Psoas muscle (tissue), 8 donors: ENCODE measurements at regions of chr18 and their contacts with region 1.

Region 1: GRCh38 chr18:79988451-79989194 is at the start of gene TXNL4A:
- DNase-seq: peak; percentile 89 to 93
- ATAC-seq: peak; percentile 98 to 99 (median 98)
- H3K4me3 ChIP-seq: peak within 1 kb of the TSS; percentile 96
- H3K27ac ChIP-seq: peak within 1 kb of the TSS; percentile 100
- H3K4me1 ChIP-seq: peaks cover 23% of the 10 kb centered on the region
- H3K27me3 ChIP-seq: no peaks in the 10 kb centered on the region
- CTCF ChIP-seq: no peak
- total RNA-seq, gene TXNL4A: 81.5 to 147 (median 108) TPM

Region 2: DNA sequence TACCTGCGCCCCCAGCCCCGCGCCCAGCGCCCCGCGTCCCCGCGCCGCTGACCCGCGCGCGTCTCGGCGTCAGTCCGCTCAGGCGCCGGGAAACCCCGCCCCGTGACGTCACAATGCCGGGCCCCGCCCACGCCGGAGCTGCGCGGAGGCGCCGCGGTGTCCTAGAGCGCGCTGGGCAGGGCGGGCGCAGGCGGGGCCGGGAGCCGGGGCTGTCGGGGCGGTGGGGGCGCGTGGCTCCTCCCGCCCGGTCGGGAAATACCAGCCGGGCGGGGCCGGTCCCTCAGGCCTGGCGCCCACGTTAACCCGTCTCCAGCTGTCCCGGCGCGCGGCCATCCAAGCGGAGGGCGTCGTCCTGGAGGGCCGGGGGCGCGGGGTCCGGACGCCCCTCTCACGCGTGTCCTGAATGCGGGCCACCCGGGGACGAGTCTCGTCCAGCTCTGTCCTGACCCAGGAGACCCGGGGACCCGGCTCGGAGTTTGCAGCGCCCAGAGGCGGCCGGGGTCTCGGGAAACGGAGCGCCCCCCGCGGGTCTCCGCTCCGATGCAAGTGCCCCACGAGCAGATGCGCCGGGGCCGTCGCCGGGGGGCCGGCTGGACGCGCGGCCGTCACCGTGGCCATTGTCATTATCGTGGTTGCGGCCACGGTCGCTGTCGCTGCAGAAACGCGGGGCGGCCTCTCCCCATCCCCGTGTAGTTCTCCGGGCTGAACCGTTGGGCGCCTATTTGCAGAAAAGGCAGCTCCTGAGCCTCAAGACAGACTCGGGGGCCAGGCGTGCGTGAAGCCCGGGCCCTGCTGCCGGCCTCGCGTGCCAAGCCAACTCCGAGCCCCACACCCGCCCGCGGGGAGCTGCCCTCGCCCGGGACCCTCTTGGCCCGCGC is 36.8 kb before region 1 on chr18 and contains the start of gene SLC66A2:
- intact Hi-C with region 1: loop called (anchors 5 kb)
- DNase-seq: peak; percentile 94 to 97
- ATAC-seq: peak; percentile 82 to 92 (median 84)
- H3K4me3 ChIP-seq: peak within 1 kb of the TSS; percentile 77
- H3K27ac ChIP-seq: peak within 1 kb of the TSS; percentile 85
- H3K4me1 ChIP-seq: peaks cover 33% of the 10 kb centered on the region
- H3K27me3 ChIP-seq: no peaks in the 10 kb centered on the region
- CTCF ChIP-seq: no peak
- total RNA-seq, gene SLC66A2: 36.4 to 160 (median 72.7) TPM

Region 3: DNA sequence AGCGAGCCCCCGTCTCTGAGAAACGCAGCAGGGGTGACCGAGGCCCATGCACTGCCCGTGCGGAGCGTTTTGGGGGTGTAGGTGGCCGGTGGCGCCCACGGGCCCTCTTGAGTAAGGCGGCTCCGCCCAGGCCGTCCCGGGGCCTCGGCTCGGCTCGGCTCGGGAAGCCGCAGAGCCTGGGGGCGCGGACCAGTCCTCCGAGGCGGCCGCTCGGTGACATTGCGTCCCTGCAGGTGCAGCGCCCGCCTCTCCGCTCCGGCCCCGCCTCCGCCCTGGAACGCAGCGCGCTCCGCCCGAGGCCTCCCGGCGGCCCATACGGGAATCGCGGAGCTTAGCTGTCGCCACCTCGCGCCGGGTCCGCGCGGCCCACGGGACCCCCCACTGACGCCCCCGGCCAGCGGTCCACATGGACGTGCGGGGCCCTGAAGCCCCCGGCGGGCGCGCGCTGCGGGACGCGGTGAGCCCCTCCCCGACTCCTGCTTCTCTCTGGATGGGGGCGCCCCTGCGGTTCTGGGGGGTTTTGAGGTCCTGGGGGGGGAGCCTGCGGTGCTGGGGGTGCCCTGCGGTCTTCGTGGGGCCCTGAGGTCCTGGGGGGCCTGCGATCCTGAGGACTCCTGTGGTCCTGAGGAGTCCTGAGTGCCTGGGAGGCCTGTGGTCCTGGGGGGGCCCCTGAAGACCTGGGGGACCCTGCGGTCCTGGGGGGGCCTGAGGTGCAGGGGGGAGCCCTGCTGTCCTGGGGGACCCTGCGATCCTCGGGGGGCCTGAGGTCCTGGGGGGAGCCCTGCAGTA is 24.1 kb before region 1 on chr18 and contains the start of gene HSBP1L1:
- intact Hi-C with region 1: loop called in 1 of 2 experiments (anchors 2 kb)
- DNase-seq: peak; percentile 67 to 83
- ATAC-seq: peak; percentile 84 to 93 (median 90)
- H3K4me3 ChIP-seq: peak within 1 kb of the TSS; percentile 80
- H3K27ac ChIP-seq: peak within 1 kb of the TSS; percentile 76
- H3K4me1 ChIP-seq: peaks cover 8% of the 10 kb centered on the region
- H3K27me3 ChIP-seq: no peaks in the 10 kb centered on the region
- CTCF ChIP-seq: peak; percentile 45
- total RNA-seq, gene HSBP1L1: 2.5 to 9.3 (median 8.4) TPM

Region 4: GRCh38 chr18:80034068-80034851 is 45.6 kb after region 1 on chr18 and contains the start of gene RBFA:
- intact Hi-C with region 1: loop called (anchors 1 to 2 kb)
- DNase-seq: peak; percentile 100
- ATAC-seq: peak; percentile 93 to 95 (median 94)
- H3K4me3 ChIP-seq: peak within 1 kb of the TSS; percentile 97
- H3K27ac ChIP-seq: peak within 1 kb of the TSS; percentile 91
- H3K4me1 ChIP-seq: peaks cover 8% of the 10 kb centered on the region
- H3K27me3 ChIP-seq: no peaks in the 10 kb centered on the region
- CTCF ChIP-seq: peak; percentile 27
- total RNA-seq, gene RBFA: 17.9 to 29.0 (median 19.0) TPM